A549 (cell line): ENCODE measurements at regions of chr17 and their contacts with region 1.

Region 1: DNA sequence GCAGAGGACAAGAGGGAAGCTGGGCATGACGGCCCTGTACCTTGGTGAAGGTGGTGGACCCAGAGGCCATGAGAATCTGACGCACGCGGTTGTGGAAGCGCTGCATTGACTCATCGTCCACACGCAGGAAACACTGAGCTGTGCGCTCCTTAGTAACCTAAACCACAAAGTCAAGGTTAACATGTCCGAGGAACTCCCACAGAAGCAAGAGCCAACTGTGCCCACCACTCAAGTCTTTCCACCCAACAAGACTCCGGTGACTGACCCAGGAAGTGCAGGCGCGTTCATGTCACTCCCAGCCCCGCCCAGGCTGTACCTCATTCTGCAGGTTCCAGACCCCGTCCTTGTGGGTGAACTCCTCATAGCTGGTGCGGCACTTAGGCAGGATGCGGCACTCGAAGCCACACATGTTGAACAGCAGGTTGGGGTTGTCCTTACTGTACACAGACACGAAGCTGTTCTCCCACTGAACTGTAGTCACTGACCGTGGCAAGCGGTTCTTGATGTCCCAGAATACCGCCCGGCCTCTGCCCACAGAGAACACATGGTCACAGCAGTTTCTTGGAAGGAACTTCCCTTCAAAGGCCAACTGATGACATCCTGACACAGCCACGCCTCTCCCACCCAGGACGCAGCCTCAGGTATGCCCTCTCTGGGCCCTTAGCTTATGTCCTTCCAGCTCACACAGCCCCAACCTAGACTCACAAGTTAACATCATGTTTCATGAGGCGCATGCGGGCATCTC is 11.5 kb downstream of the PRPF8 start:
- DNase-seq: no peak
- ATAC-seq: no peak; a peak in 1 of 6 replicates
- H3K4me3 ChIP-seq: no peak overlapping the region
- H3K27ac ChIP-seq: no peak overlapping the region
- H3K4me1 ChIP-seq: no peaks in the 10 kb centered on the region
- CTCF ChIP-seq: no peak
- EP300 ChIP-seq: no peak
- POLR2A ChIP-seq: no peak
- RAD21 ChIP-seq: no peak

Region 2: GRCh38 chr17:1658100-1658499 is 15.1 kb before region 1 on chr17:
- CTCF ChIA-PET with region 1: interaction called, 204 read pairs
- POLR2A ChIA-PET with region 1: no interaction called
- DNase-seq: no peak
- ATAC-seq: no peak
- H3K4me3 ChIP-seq: no peak overlapping the region
- H3K27ac ChIP-seq: no peak overlapping the region
- H3K4me1 ChIP-seq: 0 out of 3 replicates have a peak, but pooled peaks cover 7% of the 10 kb centered on the region
- CTCF ChIP-seq: no peak
- EP300 ChIP-seq: no peak
- POLR2A ChIP-seq: no peak
- RAD21 ChIP-seq: no peak

Region 3: GRCh38 chr17:1684378-1685189 is 11.4 kb after region 1 on chr17 and contains the start of gene PRPF8:
- CTCF ChIA-PET with region 1: interaction called, 127 read pairs
- POLR2A ChIA-PET with region 1: interaction called, 9 read pairs
- DNase-seq: peak; percentile 99
- ATAC-seq: peak; percentile 99
- H3K4me3 ChIP-seq: peak within 1 kb of the TSS; percentile 85
- H3K27ac ChIP-seq: peak within 1 kb of the TSS; percentile 95
- H3K4me1 ChIP-seq: peaks cover 7% of the 10 kb centered on the region
- CTCF ChIP-seq: no peak
- EP300 ChIP-seq: peak in 1 of 2 experiments; percentile 13; a peak in 1 of 5 replicates
- POLR2A ChIP-seq: peak; percentile 80
- RAD21 ChIP-seq: no peak
- polyA plus RNA-seq, gene PRPF8: 263 and 374 TPM in 2 replicates